OCI-LY7 (cell line): ENCODE measurements at regions of chr12 and their contacts with region 1.

Region 1: GRCh38 chr12:56117778-56118687 is at the start of gene ZC3H10:
- DNase-seq: peak; percentile 100
- H3K4me3 ChIP-seq: peak within 1 kb of the TSS; percentile 91
- H3K27ac ChIP-seq: peak within 1 kb of the TSS; percentile 94
- H3K4me1 ChIP-seq: peaks cover 26% of the 10 kb centered on the region
- CTCF ChIP-seq: peak; percentile 64
- total RNA-seq, gene ZC3H10: 11.9 and 12.6 TPM in 2 replicates

Region 2: GRCh38 chr12:55670276-55670675 is 447.8 kb before region 1 on chr12:
- CTCF ChIA-PET with region 1: no interaction called
- POLR2A ChIA-PET with region 1: no interaction called
- intact Hi-C with region 1: no loop called
- DNase-seq: no peak
- H3K4me3 ChIP-seq: no peak overlapping the region
- H3K27ac ChIP-seq: no peak overlapping the region
- H3K4me1 ChIP-seq: peaks cover 28% of the 10 kb centered on the region
- CTCF ChIP-seq: no peak

Region 3: GRCh38 chr12:55738123-55739024 is 379.7 kb before region 1 on chr12:
- CTCF ChIA-PET with region 1: no interaction called
- POLR2A ChIA-PET with region 1: no interaction called
- intact Hi-C with region 1: loop called (anchors 2 kb)
- DNase-seq: peak; percentile 96
- H3K4me3 ChIP-seq: peak overlapping the region; percentile 72
- H3K27ac ChIP-seq: peak overlapping the region; percentile 66
- H3K4me1 ChIP-seq: peaks cover 26% of the 10 kb centered on the region
- CTCF ChIP-seq: peak; percentile 94

Region 4: GRCh38 chr12:55908726-55909512 is 209.1 kb before region 1 on chr12:
- CTCF ChIA-PET with region 1: no interaction called
- POLR2A ChIA-PET with region 1: no interaction called
- intact Hi-C with region 1: no loop called
- DNase-seq: no peak
- H3K4me3 ChIP-seq: no peak overlapping the region
- H3K27ac ChIP-seq: no peak overlapping the region
- H3K4me1 ChIP-seq: peaks cover 6% of the 10 kb centered on the region
- CTCF ChIP-seq: no peak

Region 5: DNA sequence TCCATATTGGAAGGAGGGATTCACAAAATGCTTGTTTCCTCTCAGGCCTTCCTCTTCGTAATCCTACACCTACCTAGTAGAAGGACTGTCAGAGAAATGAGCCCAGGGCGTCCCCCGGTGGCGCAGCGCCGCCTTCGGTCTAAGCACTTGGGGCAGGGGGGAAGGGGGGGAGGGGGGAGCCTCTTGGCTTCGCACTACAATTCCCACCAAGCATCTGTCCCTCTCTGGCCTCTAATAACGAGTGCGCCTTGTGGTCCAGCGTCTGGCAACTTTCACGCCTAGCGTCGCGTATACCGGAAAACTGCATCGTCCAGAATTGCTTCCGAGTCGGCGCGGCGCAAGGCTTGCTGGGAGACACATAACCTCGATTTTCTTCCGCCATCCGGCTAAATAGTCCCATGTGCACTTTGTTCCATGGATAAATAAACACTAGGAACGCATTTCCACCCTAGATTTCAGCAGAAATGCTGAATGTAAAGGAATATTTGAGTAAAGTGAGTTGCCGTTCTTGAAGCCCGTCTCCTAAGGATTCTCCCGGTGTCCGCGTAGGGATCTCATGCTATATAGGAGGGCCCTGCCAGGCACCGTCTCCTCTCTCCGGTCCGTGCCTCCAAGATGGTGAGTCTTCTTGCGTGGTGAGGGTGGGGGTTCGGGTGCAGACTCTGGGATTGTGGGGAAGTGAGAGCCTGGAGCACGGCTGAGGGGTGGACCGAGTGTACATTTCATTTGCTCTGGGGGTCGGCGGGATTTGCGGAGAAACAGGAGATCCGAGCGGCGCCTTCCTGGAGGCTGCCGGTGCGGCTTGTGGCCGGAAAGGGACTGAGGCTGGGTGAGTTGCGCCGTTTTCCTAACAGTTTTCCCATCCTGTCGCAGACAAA is 76.2 kb before region 1 on chr12 and contains the start of gene RPS26:
- CTCF ChIA-PET with region 1: no interaction called
- POLR2A ChIA-PET with region 1: interaction called, 6 read pairs
- intact Hi-C with region 1: loop called (anchors 2 kb)
- DNase-seq: peak; percentile 100
- H3K4me3 ChIP-seq: peak within 1 kb of the TSS; percentile 83
- H3K27ac ChIP-seq: peak within 1 kb of the TSS; percentile 67
- H3K4me1 ChIP-seq: peaks cover 43% of the 10 kb centered on the region
- CTCF ChIP-seq: peak; percentile 77
- total RNA-seq, gene RPS26: 306 and 600 TPM in 2 replicates

Region 6: DNA sequence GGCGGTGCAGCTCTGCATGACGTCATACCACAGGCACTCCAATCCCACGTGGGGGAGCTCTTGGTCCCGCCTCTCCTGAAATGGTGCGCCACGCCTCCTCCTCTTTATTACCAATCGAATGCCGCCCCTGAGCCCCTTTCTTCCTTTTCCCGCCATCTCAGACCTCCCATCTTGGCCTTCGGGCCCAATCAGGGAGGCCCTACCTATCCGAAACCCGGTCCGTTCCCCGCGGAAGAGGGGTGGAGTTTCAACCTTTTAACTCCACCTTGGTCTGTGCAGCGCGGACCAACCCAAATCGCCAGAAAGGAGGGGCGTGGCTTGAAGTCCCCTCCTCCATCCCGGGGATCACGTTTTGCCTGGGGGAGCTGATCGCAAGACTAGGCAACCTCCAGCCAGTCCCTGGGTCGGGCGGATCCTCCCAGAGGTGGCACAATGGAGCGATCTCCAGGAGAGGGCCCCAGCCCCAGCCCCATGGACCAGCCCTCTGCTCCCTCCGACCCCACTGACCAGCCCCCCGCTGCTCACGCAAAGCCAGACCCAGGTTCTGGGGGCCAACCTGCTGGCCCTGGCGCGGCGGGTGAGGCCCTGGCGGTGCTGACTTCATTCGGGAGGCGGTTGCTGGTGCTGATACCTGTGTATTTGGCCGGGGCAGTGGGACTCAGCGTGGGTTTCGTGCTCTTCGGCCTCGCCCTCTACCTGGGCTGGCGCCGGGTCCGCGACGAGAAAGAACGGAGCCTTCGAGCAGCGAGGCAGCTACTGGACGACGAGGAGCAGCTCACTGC is 10.0 kb after region 1 on chr12 and contains the start of gene ESYT1:
- CTCF ChIA-PET with region 1: interaction called, 5 read pairs
- POLR2A ChIA-PET with region 1: interaction called, 32 read pairs
- intact Hi-C with region 1: loop called (anchors 1 kb)
- DNase-seq: peak; percentile 100
- H3K4me3 ChIP-seq: peak within 1 kb of the TSS; percentile 83
- H3K27ac ChIP-seq: peak within 1 kb of the TSS; percentile 96
- H3K4me1 ChIP-seq: peaks cover 48% of the 10 kb centered on the region
- CTCF ChIP-seq: no peak
- total RNA-seq, gene ESYT1: 74.6 and 85.9 TPM in 2 replicates

Region 7: GRCh38 chr12:56158029-56158925 is 40.2 kb after region 1 on chr12 and contains the start of gene MYL6:
- CTCF ChIA-PET with region 1: interaction called, 4 read pairs
- POLR2A ChIA-PET with region 1: interaction called, 4 read pairs
- intact Hi-C with region 1: loop called (anchors 1 kb)
- DNase-seq: peak; percentile 99
- H3K4me3 ChIP-seq: peak within 1 kb of the TSS; percentile 98
- H3K27ac ChIP-seq: peak within 1 kb of the TSS; percentile 82
- H3K4me1 ChIP-seq: peaks cover 45% of the 10 kb centered on the region
- CTCF ChIP-seq: 0 out of 2 replicates have a peak, but pooled peaks have one; percentile 3
- total RNA-seq, gene MYL6: 574 and 654 TPM in 2 replicates

Region 8: DNA sequence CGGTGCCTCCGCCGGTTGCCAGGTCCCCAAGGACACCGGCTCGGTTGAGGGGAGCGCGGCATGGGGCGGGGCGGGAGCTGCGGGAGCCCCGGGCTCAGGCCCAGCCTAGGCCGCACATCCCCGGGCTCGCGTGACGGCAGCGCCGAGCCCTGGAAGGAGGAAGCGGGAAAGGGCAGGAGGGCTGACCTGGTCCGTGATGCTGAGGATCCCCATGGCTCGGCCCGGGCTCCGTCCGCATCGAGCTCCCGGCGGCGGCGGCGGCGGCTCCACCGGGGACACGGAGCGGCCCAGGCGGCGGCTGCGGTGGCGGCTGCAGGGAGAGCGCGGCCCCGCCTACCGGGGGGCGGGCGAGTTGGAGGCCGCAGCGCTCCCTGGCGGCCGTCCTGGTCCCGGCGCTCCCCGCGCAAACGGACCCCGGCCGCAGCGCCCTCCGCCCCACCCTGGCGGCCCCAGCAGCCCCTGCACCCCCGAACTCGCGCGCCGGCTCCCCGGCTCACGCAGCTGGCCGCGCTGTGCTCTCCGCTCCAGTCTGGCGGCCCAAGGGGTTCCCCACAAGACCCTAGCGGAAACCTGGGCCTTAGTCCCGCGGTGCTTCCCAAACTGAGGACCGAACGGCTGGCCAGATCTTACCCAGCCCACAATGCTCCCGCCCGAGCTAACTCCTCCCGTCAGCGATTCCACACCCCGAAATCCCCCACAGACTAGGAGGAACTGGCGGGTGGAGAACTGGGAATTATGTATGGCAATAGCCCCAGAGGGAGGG is 140.2 kb after region 1 on chr12 and contains the start of gene ANKRD52:
- CTCF ChIA-PET with region 1: no interaction called
- POLR2A ChIA-PET with region 1: interaction called, 4 read pairs
- intact Hi-C with region 1: loop called (anchors 1 kb)
- DNase-seq: peak; percentile 87
- H3K4me3 ChIP-seq: peak within 1 kb of the TSS; percentile 93
- H3K27ac ChIP-seq: peak within 1 kb of the TSS; percentile 34
- H3K4me1 ChIP-seq: peaks cover 17% of the 10 kb centered on the region
- CTCF ChIP-seq: peak; percentile 73
- total RNA-seq, gene ANKRD52: 7.0 and 11.7 TPM in 2 replicates

Region 9: DNA sequence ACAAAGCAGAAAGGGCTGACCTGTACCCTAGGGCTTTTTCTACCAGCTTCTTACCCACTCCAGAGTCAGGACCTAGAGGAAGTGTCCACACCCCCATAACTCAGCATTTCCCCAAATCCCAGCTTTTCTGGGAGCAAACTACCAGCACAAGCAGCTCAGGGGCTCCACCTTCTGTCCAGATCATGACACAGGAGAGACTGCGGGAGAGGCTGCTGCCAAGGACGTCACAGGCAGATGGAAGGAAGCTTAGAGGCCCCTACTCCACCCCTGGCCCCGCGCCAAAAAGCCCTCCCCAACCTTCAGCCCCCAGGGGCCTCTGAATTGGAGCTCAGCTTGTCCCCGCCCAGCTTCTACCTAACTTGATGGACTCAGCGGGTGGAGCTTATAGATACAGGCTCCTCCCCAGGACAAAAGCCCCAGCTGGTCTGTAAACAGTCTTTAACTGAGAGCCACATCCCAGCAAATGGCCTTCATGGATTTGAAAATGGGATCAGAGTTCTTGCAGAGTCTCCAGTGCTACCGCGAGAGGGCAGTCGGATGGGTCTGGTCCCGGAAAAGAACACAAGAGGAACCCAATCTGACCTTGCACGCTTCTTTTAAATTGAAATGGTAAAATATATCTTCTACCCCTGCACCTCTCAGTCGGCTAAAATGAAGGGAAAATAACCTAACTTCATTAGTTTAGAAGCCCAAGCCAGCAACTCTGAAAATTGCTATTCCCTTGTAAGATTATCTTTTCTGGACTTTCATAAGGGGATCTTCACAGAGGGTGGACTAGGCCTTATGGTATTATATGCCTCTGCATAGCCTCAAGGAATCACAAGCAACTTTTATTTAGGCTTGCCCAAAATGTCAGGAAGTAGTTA is 518.9 kb after region 1 on chr12:
- CTCF ChIA-PET with region 1: no interaction called
- POLR2A ChIA-PET with region 1: no interaction called
- intact Hi-C with region 1: loop called (anchors 10 kb)
- DNase-seq: peak; percentile 99
- H3K4me3 ChIP-seq: peak overlapping the region; percentile 76
- H3K27ac ChIP-seq: peak overlapping the region; percentile 92
- H3K4me1 ChIP-seq: peaks cover 53% of the 10 kb centered on the region
- CTCF ChIP-seq: peak; percentile 93